ENCODE measurements at regions of chr7 and their contacts with region 1.

Region 1: DNA sequence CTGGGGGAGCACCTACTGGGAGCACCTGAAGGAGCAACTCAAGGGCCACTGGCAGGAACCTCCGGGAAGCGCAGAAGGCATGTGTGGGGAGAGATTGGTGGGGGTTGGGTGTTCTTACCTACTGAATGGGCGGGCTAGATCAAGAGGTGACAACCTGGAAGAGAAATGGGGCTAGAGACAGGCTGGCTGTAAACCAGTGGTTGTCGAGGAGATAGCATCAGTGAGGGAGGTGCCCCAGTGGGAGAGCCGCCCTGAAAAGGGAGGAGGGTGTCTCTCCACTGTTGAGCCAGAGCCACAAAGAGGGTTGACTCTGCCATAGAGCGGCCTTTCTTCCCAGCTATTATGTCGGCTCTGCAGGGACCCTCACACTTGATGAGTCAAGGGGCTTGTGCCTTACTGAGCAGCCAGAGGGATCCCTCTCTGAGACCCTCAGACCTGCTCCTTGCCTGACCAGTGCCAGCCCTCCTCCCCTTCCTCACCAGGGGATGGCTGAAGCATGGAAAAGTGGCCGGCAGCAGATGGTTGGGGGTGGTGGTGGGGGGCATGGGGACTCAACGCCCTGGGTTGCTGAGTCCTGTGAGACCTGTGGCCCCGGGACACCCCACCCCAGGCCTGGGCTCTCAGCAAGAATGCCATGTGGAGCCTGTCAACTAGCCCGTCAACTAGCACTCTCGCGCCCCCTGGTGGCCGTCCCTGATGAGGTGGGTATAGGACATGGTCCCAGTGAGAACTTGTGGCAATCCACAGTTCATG is 36.5 kb upstream of the PURB start:
- DNase-seq: peak; percentile 99
- H3K4me3 Mint-ChIP-seq: no peak overlapping the region
- H3K27ac Mint-ChIP-seq: peak overlapping the region; percentile 30
- H3K4me1 Mint-ChIP-seq: peaks cover 8% of the 10 kb centered on the region
- H3K27me3 Mint-ChIP-seq: no peaks in the 10 kb centered on the region

Region 2: DNA sequence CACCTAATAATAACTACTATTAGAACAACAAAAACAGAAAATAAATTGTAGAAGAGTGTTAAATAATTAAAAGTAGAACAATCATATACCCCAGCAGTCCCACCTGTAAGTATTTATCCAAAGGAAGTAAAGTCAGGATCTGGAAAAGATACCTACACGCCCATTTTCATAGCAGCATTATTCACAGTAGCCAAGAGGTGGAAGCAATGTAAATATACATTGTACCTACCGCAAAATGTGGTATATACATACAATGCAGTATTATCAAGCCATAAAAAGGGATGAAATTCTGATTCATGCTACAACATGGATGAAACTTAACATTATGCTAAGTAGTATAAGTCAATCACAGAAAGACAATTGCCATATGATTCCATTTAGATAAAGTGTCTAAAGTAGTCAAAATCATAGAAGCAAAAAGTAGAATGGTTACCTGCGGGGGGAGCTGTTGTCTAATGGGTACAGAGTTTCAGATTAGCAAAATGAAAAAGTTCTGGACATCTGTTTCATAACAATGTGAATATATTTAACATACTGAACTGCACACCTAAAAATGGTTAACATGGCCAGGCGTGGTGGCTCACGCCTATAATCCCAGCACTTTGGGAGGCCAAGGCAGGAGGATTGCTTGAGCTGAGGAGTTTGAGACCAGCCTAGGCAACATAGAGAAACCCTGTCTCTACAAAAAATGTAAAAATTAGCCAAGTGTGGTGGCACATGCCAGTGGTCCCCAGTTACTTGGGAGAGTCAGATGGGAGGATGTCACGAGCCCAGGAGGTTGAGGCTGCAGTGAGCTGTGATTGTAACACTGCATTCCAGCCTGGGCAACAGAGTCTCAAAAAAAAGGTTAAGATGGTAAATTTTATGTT is 333.7 kb before region 1 on chr7:
- CTCF ChIA-PET with region 1: no interaction called
- intact Hi-C with region 1: loop called (anchors 1 kb)
- DNase-seq: peak; percentile 83
- H3K4me3 Mint-ChIP-seq: no peak overlapping the region
- H3K27ac Mint-ChIP-seq: no peak overlapping the region
- H3K4me1 Mint-ChIP-seq: peaks cover 4% of the 10 kb centered on the region
- H3K27me3 Mint-ChIP-seq: peaks cover 1% of the 10 kb centered on the region

Region 3: DNA sequence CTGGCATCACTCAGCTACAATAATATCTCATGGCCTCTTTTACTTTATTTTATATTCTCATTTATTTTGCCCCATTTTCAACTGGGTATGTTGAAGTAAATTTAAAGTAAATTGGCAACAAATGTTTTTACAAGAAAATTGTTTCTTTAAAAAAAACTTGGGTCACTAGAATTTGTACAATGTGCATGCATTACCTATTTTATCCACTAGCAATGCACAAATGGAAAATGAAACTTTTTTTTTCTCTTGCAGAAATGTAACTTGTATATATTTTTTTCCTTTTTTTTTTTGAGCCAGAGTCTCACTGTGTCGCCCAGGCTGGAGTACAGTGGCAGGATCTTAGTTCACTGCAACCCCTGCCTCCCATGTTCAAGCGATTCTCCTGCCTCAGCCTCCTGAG is 63.6 kb before region 1 on chr7:
- CTCF ChIA-PET with region 1: interaction called, 34 read pairs
- intact Hi-C with region 1: loop called (anchors 1 kb)
- DNase-seq: no peak
- H3K4me3 Mint-ChIP-seq: no peak overlapping the region
- H3K27ac Mint-ChIP-seq: no peak overlapping the region
- H3K4me1 Mint-ChIP-seq: peaks cover 23% of the 10 kb centered on the region
- H3K27me3 Mint-ChIP-seq: no peaks in the 10 kb centered on the region

Measured in activated naive CD4-positive, alpha-beta T cell treated with anti-CD3 and anti-CD28 coated beads for 36 hours (primary cell).